ENCODE measurements at regions of chr16 and their contacts with region 1.

Region 1: GRCh38 chr16:58129097-58129936 is at the start of gene CFAP20:
- DNase-seq: peak; percentile 97
- H3K4me3 ChIP-seq: peak within 1 kb of the TSS; percentile 69
- H3K27me3 ChIP-seq: no peaks in the 10 kb centered on the region
- CTCF ChIP-seq: no peak
- polyA plus RNA-seq, gene CFAP20: 36.6 and 45.6 TPM in 2 replicates

Region 2: GRCh38 chr16:58025351-58026138 is 103.8 kb before region 1 on chr16 and contains the start of gene MMP15:
- CTCF ChIA-PET with region 1: interaction called, 27 read pairs
- POLR2A ChIA-PET with region 1: no interaction called
- DNase-seq: no peak
- H3K4me3 ChIP-seq: peak within 1 kb of the TSS; percentile 53
- H3K27me3 ChIP-seq: peaks cover 9% of the 10 kb centered on the region
- CTCF ChIP-seq: no peak
- polyA plus RNA-seq, gene MMP15: 0.71 and 1.1 TPM in 2 replicates

Region 3: GRCh38 chr16:58152246-58152868 is 23.0 kb after region 1 on chr16:
- CTCF ChIA-PET with region 1: no interaction called
- POLR2A ChIA-PET with region 1: interaction called, 14 read pairs
- DNase-seq: no peak
- H3K4me3 ChIP-seq: no peak overlapping the region
- H3K27me3 ChIP-seq: no peaks in the 10 kb centered on the region
- CTCF ChIP-seq: no peak

Region 4: GRCh38 chr16:59604354-59604753 is 1475.0 kb after region 1 on chr16:
- CTCF ChIA-PET with region 1: no interaction called
- POLR2A ChIA-PET with region 1: no interaction called
- DNase-seq: no peak
- H3K4me3 ChIP-seq: no peak overlapping the region
- H3K27me3 ChIP-seq: no peaks in the 10 kb centered on the region
- CTCF ChIP-seq: no peak